IMR-90 (cell line): ENCODE measurements at regions of chr13 and their contacts with region 1.

Region 1: GRCh38 chr13:104318121-104318520 is 1251.9 kb upstream of the SLC10A2 start:
- DNase-seq: peak; percentile 49
- ATAC-seq: peak; percentile 66
- H3K4me3 ChIP-seq: no peak overlapping the region
- H3K27ac ChIP-seq: no peak overlapping the region
- H3K4me1 ChIP-seq: peaks cover 2% of the 10 kb centered on the region; the same call in 1 of the 2 replicates
- H3K27me3 ChIP-seq: no peaks in the 10 kb centered on the region
- CTCF ChIP-seq: peak; percentile 58
- POLR2A ChIP-seq: no peak
- RAD21 ChIP-seq: peak; percentile 63

Region 2: DNA sequence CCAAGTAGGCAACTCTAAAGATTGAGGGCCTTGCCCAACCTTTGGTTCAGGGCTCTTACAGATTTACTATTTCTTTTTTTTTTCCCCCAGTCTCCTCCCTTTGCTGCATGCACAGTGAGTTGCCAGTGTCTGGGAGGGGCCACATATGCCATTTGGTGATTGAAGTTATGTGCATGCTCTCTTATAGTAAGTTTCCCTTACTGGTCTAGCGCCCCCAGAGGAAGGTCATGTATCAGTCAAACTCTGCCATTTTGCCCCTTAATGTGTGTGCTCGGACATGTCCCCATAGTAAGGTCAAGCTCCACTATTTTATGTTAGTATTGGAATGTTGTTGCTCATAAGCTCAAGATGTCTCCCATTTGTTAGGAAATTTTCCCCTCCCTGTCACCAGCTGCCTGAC is 113.9 kb before region 1 on chr13:
- CTCF ChIA-PET with region 1: no interaction called
- POLR2A ChIA-PET with region 1: no interaction called
- dilution Hi-C with region 1: no loop called
- in situ Hi-C with region 1: no loop called
- intact Hi-C with region 1: no loop called
- DNase-seq: no peak
- ATAC-seq: no peak
- H3K4me3 ChIP-seq: no peak overlapping the region
- H3K27ac ChIP-seq: no peak overlapping the region
- H3K4me1 ChIP-seq: no peaks in the 10 kb centered on the region
- H3K27me3 ChIP-seq: no peaks in the 10 kb centered on the region
- CTCF ChIP-seq: no peak
- POLR2A ChIP-seq: no peak
- RAD21 ChIP-seq: no peak

Region 3: DNA sequence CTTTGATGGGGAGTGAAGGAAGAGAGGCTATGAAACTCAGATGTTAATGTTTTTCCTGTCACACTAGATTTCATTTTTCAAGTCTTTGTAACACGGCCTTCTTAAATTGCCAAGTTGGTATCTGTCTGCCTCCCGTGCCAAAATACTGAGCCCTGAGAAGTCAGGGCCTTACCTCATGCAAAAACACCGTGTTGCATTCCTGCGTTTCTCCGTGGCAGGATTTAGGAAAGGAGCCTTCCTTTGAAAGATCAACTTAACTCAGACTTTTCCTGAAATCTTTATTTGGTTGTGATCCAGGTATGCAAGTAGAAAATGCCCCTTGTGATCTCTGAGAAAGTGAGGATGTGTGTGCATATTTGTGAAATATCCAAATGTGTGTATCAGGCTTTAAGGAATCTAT is 39.1 kb after region 1 on chr13:
- CTCF ChIA-PET with region 1: no interaction called
- POLR2A ChIA-PET with region 1: no interaction called
- dilution Hi-C with region 1: no loop called
- in situ Hi-C with region 1: no loop called
- intact Hi-C with region 1: no loop called
- DNase-seq: no peak
- ATAC-seq: no peak
- H3K4me3 ChIP-seq: no peak overlapping the region
- H3K27ac ChIP-seq: no peak overlapping the region
- H3K4me1 ChIP-seq: no peaks in the 10 kb centered on the region
- H3K27me3 ChIP-seq: no peaks in the 10 kb centered on the region
- CTCF ChIP-seq: no peak
- POLR2A ChIP-seq: no peak
- RAD21 ChIP-seq: no peak

Region 4: GRCh38 chr13:104411141-104411765 is 93.1 kb after region 1 on chr13:
- CTCF ChIA-PET with region 1: no interaction called
- POLR2A ChIA-PET with region 1: no interaction called
- dilution Hi-C with region 1: no loop called
- in situ Hi-C with region 1: no loop called
- intact Hi-C with region 1: loop called (anchors 2 kb)
- DNase-seq: peak; percentile 0
- ATAC-seq: peak; percentile 77
- H3K4me3 ChIP-seq: no peak overlapping the region
- H3K27ac ChIP-seq: no peak overlapping the region
- H3K4me1 ChIP-seq: no peaks in the 10 kb centered on the region
- H3K27me3 ChIP-seq: no peaks in the 10 kb centered on the region
- CTCF ChIP-seq: no peak
- POLR2A ChIP-seq: no peak
- RAD21 ChIP-seq: no peak

Region 5: DNA sequence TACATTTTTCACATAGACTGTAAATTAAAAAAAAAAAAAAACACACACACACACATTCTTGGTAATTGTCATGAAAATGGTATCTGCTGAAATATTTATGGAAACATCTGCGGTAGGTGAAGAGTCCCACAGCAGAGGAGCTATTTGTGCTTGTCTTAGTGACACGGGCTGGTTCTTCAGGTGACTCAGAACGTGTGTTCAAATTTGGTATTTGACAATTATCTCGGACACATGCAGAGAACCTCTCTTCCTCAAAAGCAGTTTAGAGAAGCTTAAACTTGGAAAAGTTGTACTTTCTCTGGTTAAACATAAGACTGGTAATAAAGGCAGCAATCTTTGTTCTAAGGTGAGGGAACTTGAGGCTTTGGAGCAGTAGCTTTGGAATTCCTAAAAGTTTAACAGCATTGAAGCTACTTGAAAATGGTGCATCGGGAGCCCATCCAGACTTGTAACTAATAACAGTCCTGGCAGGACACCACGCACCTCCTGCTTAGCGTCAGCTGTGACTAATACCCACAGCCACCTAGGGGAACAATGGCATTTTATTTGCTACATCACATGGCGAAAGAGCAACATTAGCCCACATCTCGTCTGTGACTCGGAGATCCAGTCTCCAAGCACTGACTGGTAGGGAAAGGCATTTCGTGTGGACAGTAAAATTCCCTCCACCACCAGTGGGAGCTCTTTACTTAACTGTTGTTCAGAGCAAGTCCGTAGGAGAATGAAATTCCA is 253.2 kb after region 1 on chr13:
- CTCF ChIA-PET with region 1: interaction called, 9 read pairs
- POLR2A ChIA-PET with region 1: no interaction called
- dilution Hi-C with region 1: no loop called
- in situ Hi-C with region 1: no loop called
- intact Hi-C with region 1: loop called (anchors 5 kb)
- DNase-seq: peak; percentile 82
- ATAC-seq: peak; percentile 99
- H3K4me3 ChIP-seq: no peak overlapping the region
- H3K27ac ChIP-seq: no peak overlapping the region
- H3K4me1 ChIP-seq: peaks cover 1% of the 10 kb centered on the region; the same call in 1 of the 2 replicates
- H3K27me3 ChIP-seq: no peaks in the 10 kb centered on the region
- CTCF ChIP-seq: peak; percentile 73
- POLR2A ChIP-seq: no peak
- RAD21 ChIP-seq: peak; percentile 76

Region 6: DNA sequence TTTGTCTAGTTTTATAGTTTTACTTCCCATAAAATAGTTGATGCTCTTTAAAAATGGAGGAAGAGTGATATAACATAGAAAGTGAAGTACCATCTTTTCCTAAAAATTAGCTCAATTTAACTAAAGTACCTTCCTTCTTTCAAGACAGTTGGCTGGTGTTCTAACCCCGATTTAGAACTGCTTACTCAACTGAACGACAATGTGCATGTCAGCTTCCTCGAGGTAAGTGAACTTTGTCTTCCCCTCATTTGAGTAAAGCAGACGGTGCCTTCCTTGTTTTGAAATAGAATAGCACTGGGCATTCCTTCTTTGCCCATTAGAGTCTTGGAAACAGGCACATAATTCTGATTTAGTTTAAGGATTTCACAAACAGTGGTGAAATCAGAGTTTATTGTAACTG is 698.1 kb after region 1 on chr13:
- CTCF ChIA-PET with region 1: no interaction called
- POLR2A ChIA-PET with region 1: no interaction called
- dilution Hi-C with region 1: no loop called
- in situ Hi-C with region 1: no loop called
- intact Hi-C with region 1: no loop called
- DNase-seq: no peak
- ATAC-seq: no peak
- H3K4me3 ChIP-seq: no peak overlapping the region
- H3K27ac ChIP-seq: no peak overlapping the region
- H3K4me1 ChIP-seq: no peaks in the 10 kb centered on the region
- H3K27me3 ChIP-seq: no peaks in the 10 kb centered on the region
- CTCF ChIP-seq: no peak
- POLR2A ChIP-seq: no peak
- RAD21 ChIP-seq: no peak